IMR-90 (cell line): ENCODE measurements at regions of chr1 and their contacts with region 1.

Region 1: GRCh38 chr1:27725374-27726173 is at the start of gene FAM76A:
- DNase-seq: peak; percentile 99
- ATAC-seq: peak; percentile 99
- H3K4me3 ChIP-seq: peak within 1 kb of the TSS; percentile 74
- H3K27ac ChIP-seq: peak within 1 kb of the TSS; percentile 43
- H3K4me1 ChIP-seq: no peaks in the 10 kb centered on the region
- H3K27me3 ChIP-seq: peaks cover 2% of the 10 kb centered on the region; the same call in 1 of the 2 replicates
- CTCF ChIP-seq: peak; percentile 63
- POLR2A ChIP-seq: peak; percentile 72
- RAD21 ChIP-seq: no peak
- total RNA-seq, gene FAM76A: 8.6 and 10.0 TPM in 2 replicates

Region 2: GRCh38 chr1:27830621-27831424 is 105.2 kb after region 1 on chr1 and contains the start of gene PPP1R8:
- CTCF ChIA-PET with region 1: no interaction called
- POLR2A ChIA-PET with region 1: interaction called, 4 read pairs
- dilution Hi-C with region 1: no loop called
- in situ Hi-C with region 1: no loop called
- intact Hi-C with region 1: loop called (anchors 5 kb)
- DNase-seq: peak; percentile 95
- ATAC-seq: peak; percentile 99
- H3K4me3 ChIP-seq: peak within 1 kb of the TSS; percentile 98
- H3K27ac ChIP-seq: peak within 1 kb of the TSS; percentile 91
- H3K4me1 ChIP-seq: peaks cover 7% of the 10 kb centered on the region; the same call in 1 of the 2 replicates
- H3K27me3 ChIP-seq: no peaks in the 10 kb centered on the region
- CTCF ChIP-seq: no peak
- POLR2A ChIP-seq: peak; percentile 96
- RAD21 ChIP-seq: no peak
- total RNA-seq, gene PPP1R8: 60.5 and 80.1 TPM in 2 replicates

Region 3: DNA sequence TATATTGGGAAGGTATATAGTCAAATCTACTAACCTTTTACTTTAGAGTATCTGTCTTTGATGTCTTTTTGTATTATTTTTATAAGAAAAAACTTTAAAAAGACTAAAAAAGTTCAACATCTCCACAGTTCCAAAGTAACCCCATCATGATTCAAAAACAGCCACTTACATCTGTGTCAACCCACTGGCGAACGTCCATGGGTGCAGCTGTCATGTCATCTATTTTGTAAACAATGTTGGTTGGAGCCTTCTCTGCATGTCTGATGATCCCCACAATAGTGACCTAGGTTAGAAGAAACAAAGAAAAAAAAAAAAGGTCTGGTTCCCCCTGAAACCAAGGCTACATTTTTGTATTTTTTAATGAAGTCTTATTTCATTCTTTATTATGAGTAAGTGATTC is 181.2 kb after region 1 on chr1:
- CTCF ChIA-PET with region 1: no interaction called
- POLR2A ChIA-PET with region 1: no interaction called
- dilution Hi-C with region 1: no loop called
- in situ Hi-C with region 1: no loop called
- intact Hi-C with region 1: no loop called
- DNase-seq: no peak
- ATAC-seq: no peak
- H3K4me3 ChIP-seq: no peak overlapping the region
- H3K27ac ChIP-seq: no peak overlapping the region
- H3K4me1 ChIP-seq: no peaks in the 10 kb centered on the region
- H3K27me3 ChIP-seq: no peaks in the 10 kb centered on the region
- CTCF ChIP-seq: no peak
- POLR2A ChIP-seq: no peak
- RAD21 ChIP-seq: no peak

Region 4: GRCh38 chr1:27928216-27928954 is 202.8 kb after region 1 on chr1:
- CTCF ChIA-PET with region 1: no interaction called
- POLR2A ChIA-PET with region 1: no interaction called
- dilution Hi-C with region 1: no loop called
- in situ Hi-C with region 1: no loop called
- intact Hi-C with region 1: no loop called
- DNase-seq: no peak
- ATAC-seq: no peak
- H3K4me3 ChIP-seq: no peak overlapping the region
- H3K27ac ChIP-seq: no peak overlapping the region
- H3K4me1 ChIP-seq: no peaks in the 10 kb centered on the region
- H3K27me3 ChIP-seq: no peaks in the 10 kb centered on the region
- CTCF ChIP-seq: no peak
- POLR2A ChIP-seq: no peak
- RAD21 ChIP-seq: no peak